PC-3 (cell line): ENCODE measurements at regions of chr3 and their contacts with region 1.

Region 1: GRCh38 chr3:182325213-182325941 is 467.9 kb upstream of the ATP11B start:
- DNase-seq: peak; percentile 45
- ATAC-seq: no peak
- H3K4me3 ChIP-seq: no peak overlapping the region
- H3K27ac ChIP-seq: no peak overlapping the region
- H3K4me1 ChIP-seq: peaks cover 46% of the 10 kb centered on the region
- H3K27me3 ChIP-seq: no peaks in the 10 kb centered on the region
- CTCF ChIP-seq: no peak

Region 2: GRCh38 chr3:180912304-180913296 is 1412.8 kb before region 1 on chr3 and contains the start of gene FXR1:
- CTCF ChIA-PET with region 1: no interaction called
- POLR2A ChIA-PET with region 1: no interaction called
- intact Hi-C with region 1: loop called (anchors 5 kb)
- DNase-seq: peak; percentile 83
- ATAC-seq: peak; percentile 99
- H3K4me3 ChIP-seq: peak within 1 kb of the TSS; percentile 100
- H3K27ac ChIP-seq: peak within 1 kb of the TSS; percentile 57
- H3K4me1 ChIP-seq: peaks cover 24% of the 10 kb centered on the region
- H3K27me3 ChIP-seq: no peaks in the 10 kb centered on the region
- CTCF ChIP-seq: peak; percentile 58
- total RNA-seq, gene FXR1: 124 and 133 TPM in 2 replicates

Region 3: DNA sequence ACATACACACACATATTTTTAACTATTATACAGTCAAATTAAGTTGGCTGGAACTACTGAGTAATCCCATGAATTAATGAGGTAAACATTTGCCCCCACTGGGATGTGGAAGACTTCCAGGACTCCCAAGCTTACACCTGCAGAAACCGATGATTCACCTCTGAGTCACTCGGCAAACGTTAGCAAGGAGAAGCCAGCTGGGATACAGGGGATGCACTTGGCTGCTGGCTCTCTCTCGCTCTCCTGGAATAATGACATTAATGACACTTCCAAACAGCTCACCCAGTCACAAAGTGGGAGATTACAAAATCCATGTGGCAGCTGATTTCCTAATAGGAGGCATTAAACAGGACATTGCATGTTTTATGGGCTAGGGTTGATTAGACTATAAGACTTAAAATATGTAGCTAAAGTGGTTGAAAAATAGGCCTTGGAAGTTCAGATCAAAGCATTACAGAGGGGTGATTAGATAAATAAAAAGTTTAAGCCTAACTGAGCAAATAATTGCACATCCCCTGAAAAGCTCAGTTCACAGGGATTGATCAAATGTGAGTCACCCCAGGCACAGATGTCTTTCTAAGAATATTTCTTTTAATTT is 112.8 kb before region 1 on chr3:
- CTCF ChIA-PET with region 1: no interaction called
- POLR2A ChIA-PET with region 1: no interaction called
- intact Hi-C with region 1: loop called (anchors 1 kb)
- DNase-seq: peak; percentile 99
- ATAC-seq: peak; percentile 95
- H3K4me3 ChIP-seq: peak overlapping the region; percentile 10; the same call in 1 of the 2 replicates
- H3K27ac ChIP-seq: peak overlapping the region; percentile 89
- H3K4me1 ChIP-seq: peaks cover 26% of the 10 kb centered on the region
- H3K27me3 ChIP-seq: no peaks in the 10 kb centered on the region
- CTCF ChIP-seq: no peak